AG04450 (cell line): ENCODE measurements at regions of chr2 and their contacts with region 1.

Region 1: GRCh38 chr2:102166189-102166845 is 20.5 kb upstream of the IL1RL2 start:
- DNase-seq: no peak
- H3K4me3 ChIP-seq: no peak overlapping the region
- H3K27ac ChIP-seq: no peak overlapping the region
- H3K27me3 ChIP-seq: no peaks in the 10 kb centered on the region
- CTCF ChIP-seq: peak; percentile 64

Region 2: GRCh38 chr2:102005989-102006885 is 160.1 kb before region 1 on chr2:
- CTCF ChIA-PET with region 1: interaction called, 13 read pairs
- POLR2A ChIA-PET with region 1: no interaction called
- DNase-seq: no peak
- H3K4me3 ChIP-seq: no peak overlapping the region
- H3K27ac ChIP-seq: no peak overlapping the region
- H3K27me3 ChIP-seq: peaks cover 9% of the 10 kb centered on the region
- CTCF ChIP-seq: peak; percentile 76

Region 3: DNA sequence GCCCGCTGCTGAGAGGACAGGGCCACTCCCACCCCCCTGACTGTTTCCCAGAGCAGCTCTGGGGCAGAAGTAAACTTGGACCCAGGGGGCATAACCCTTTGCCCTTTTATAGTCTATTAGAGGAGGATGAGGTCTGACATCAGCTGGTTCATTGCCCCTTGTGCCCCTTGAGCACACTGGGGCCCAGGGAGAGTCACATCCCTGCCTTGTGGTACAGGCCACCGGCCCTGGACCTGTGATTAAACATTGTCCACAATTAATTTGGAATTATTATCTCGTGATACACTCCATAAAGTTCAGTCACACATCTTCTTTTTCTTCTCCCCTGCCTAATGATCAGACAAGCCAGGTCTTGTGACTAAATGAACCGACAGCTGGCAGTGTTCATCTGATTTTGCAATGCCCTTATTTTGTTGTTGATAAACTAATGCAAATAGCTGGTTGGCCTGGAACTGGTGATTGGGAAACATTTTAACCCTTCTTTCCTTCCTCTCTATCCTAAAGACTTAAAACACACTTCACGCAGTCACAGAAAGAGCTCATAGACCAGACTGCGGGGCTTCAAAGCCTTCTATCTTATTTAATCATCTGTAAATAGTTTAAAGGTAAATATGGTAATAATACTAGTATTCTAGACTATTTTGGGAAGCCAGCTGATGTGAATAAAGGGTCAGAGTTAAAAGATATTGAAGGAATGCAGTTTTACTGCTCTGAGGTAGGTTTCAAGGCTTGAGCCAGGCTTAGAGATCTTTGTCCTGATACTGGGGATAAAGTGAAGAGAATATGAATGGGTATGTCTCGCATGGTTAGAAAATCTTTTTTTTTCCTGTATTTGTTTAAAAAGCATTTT is 10.4 kb before region 1 on chr2:
- CTCF ChIA-PET with region 1: interaction called, 11 read pairs
- POLR2A ChIA-PET with region 1: no interaction called
- DNase-seq: no peak
- H3K4me3 ChIP-seq: no peak overlapping the region
- H3K27ac ChIP-seq: peak overlapping the region; percentile 80
- H3K27me3 ChIP-seq: no peaks in the 10 kb centered on the region
- CTCF ChIP-seq: no peak